ENCODE measurements at regions of chr3 and their contacts with region 1.

Region 1: GRCh38 chr3:196518966-196519717 is 4.0 kb upstream of the SMCO1 start:
- DNase-seq: peak; percentile 88

Region 2: GRCh38 chr3:196251918-196252317 is 267.2 kb before region 1 on chr3:
- intact Hi-C with region 1: loop called (anchors 2 kb)
- DNase-seq: no peak

Region 3: GRCh38 chr3:196336319-196337145 is 182.6 kb before region 1 on chr3:
- intact Hi-C with region 1: no loop called
- DNase-seq: no peak

Region 4: DNA sequence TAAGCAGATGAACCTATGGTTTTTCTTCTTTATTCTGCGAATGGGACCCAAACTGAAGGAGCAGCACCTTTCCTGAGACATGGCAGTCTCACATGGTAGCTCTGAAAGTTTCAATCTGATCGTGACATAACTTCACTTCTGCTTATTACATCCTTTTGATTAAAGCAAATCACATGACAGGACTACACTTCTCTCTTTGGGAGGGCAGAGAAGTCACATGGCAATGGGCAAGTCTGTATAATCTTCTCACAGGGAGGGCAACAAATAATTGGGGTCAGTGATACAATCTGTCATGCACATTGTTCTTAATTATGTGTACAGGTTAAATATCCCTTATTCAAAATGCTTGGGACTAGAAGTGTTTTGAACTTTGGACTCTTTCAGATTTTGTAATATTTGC is 401.6 kb after region 1 on chr3:
- intact Hi-C with region 1: no loop called
- DNase-seq: no peak